Left cardiac atrium (tissue), 4 donors: ENCODE measurements at regions of chr6 and their contacts with region 1.

Region 1: GRCh38 chr6:121430514-121431460 is 4.7 kb upstream of the GJA1 start:
- DNase-seq: no peak
- ATAC-seq: peak; percentile 21 to 38

Region 2: DNA sequence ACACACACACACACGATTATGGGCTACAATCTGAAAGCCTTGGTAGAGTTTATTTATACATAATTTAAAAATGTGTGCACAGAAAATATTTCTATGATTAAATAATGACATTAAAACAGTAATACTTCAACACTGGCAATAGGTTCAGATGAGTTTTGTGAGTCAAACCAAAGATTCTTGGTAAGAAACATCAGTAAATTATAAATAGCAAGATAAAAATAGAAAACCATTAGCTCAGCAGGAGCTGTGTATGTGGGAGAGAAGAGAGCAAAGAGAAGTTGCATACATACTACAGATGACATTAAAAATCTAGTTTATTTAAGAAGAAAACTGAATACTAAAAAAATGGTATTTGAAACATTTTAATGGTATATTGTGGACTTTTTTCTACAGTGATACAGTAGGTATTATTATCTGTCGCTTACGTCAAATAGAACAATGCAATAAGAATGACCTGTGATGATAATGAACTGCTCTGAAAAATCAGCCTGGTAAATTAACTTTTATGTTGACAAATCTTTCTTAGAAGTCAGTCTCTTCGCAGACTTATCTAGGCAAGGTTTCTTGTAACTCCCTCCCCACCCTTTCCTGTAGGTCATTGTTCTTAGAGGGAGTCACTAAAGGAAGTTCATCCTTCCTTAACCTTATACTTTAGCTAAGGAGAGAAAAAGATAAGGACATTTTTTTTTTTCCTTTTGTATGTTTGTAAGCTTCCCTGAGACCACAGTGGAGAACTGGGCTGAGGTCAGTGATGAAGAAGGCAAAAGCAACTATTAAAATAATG is 154.0 kb after region 1 on chr6:
- intact Hi-C with region 1: loop called in 1 of 2 experiments (anchors 10 kb)
- DNase-seq: no peak
- ATAC-seq: peak; percentile 72 to 86

Region 3: DNA sequence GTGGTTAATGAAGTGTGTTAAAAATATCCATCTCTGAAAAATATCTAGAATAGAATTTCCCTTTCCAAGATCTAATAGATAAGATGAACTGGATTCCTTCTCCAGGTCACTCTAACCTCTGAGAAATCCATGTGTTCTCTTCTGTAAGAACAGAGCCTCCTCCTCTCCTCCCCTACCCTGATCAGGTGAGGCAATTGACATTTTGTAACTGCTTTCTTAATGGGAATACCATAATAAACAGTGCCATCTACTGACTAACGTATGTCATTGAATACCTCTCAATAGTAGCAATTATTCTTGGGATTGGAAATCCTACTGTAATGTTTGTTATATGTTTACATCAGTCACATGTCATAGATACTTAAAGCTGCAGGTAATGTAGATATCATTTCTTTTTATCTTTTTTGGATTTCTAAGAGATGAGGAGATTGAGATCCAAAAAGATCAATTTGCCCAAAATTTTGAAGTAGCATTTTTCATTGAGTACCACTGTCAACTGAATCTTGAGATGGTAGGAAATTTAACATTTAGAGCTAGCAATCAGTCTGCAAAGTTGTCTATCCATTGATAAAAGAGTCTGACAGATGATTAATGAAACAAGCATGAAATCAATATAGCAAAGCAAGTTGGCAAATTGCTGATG is 602.9 kb after region 1 on chr6:
- intact Hi-C with region 1: loop called (anchors 1 to 5 kb)
- DNase-seq: no peak
- ATAC-seq: peak; percentile 84 to 89